Activated CD4-positive, alpha-beta memory T cell treated with anti-CD3 and anti-CD28 coated beads for 36 hours (primary cell): ENCODE measurements at regions of chr11 and their contacts with region 1.

Region 1: DNA sequence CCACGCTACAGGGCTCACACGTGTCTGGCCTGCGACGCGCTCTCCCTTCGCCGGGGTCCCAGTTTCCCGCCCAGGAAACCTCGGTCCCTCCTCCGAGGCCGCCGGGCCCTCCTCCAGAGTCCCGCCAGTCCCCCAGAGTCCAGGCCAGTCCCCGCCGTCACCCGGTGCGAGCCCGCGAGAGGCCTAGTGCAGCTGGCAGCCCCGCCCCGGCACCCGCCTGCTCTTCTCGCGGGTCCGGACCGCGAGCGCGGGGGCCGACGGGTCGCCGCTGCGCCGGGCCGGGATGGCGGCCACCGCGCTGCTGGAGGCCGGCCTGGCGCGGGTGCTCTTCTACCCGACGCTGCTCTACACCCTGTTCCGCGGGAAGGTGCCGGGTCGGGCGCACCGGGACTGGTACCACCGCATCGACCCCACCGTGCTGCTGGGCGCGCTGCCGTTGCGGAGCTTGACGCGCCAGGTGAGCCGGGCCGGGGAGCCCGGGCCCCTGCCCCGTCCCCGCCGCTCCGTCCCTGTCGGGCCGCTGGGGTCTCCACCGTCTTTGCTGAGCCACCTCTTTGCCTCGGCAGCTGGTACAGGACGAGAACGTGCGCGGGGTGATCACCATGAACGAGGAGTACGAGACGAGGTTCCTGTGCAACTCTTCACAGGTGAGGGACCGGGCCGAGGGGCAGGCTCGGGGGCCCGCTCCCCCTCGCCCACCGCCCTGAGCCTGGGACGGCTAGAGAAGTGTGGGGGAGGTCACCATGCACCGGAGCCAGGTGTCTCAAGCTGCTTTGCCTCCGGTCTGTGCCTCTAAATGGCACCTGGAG is at the start of gene PTPMT1:
- DNase-seq: peak; percentile 80
- H3K4me3 Mint-ChIP-seq: peak within 1 kb of the TSS; percentile 81
- H3K27ac Mint-ChIP-seq: peak within 1 kb of the TSS; percentile 72
- H3K4me1 Mint-ChIP-seq: peaks cover 29% of the 10 kb centered on the region
- H3K27me3 Mint-ChIP-seq: no peaks in the 10 kb centered on the region
- total RNA-seq, gene PTPMT1: 45.7 to 47.9 TPM

Region 2: GRCh38 chr11:47495011-47495855 is 70.3 kb before region 1 on chr11:
- CTCF ChIA-PET with region 1: no interaction called
- POLR2A ChIA-PET with region 1: no interaction called
- intact Hi-C with region 1: no loop called
- DNase-seq: no peak
- H3K4me3 Mint-ChIP-seq: no peak overlapping the region
- H3K27ac Mint-ChIP-seq: no peak overlapping the region
- H3K4me1 Mint-ChIP-seq: peaks cover 14% of the 10 kb centered on the region
- H3K27me3 Mint-ChIP-seq: no peaks in the 10 kb centered on the region

Region 3: GRCh38 chr11:47578524-47579460 is 13.2 kb after region 1 on chr11 and contains the starts of genes KBTBD4 and NDUFS3:
- CTCF ChIA-PET with region 1: no interaction called
- POLR2A ChIA-PET with region 1: interaction called, 33 read pairs
- intact Hi-C with region 1: no loop called
- DNase-seq: peak; percentile 93
- H3K4me3 Mint-ChIP-seq: peak within 1 kb of the TSS; percentile 94
- H3K27ac Mint-ChIP-seq: peak within 1 kb of the TSS; percentile 93
- H3K4me1 Mint-ChIP-seq: peaks cover 32% of the 10 kb centered on the region
- H3K27me3 Mint-ChIP-seq: peaks cover 1% of the 10 kb centered on the region
- total RNA-seq, gene KBTBD4: 18.7 to 18.8 TPM
- total RNA-seq, gene NDUFS3: 94.0 to 94.4 TPM